CD4-positive, alpha-beta memory T cell (primary cell): ENCODE measurements at regions of chr2 and their contacts with region 1.

Region 1: GRCh38 chr2:68837164-68837860 is 33.9 kb downstream of the BMP10 start:
- DNase-seq: peak; percentile 50 to 62 (median 54)
- H3K4me3 ChIP-seq: no peak overlapping the region
- H3K4me3 Mint-ChIP-seq: peak overlapping the region in 2 of 8 donors; percentile 24 to 38
- H3K27ac ChIP-seq: no peak overlapping the region
- H3K27ac Mint-ChIP-seq: peak overlapping the region in 3 of 7 donors; percentile 47 to 66 (median 60)
- H3K4me1 ChIP-seq: peaks cover 26% of the 10 kb centered on the region
- H3K4me1 Mint-ChIP-seq: peaks cover 19 to 44% (median 31%) of the 10 kb centered on the region in 4 donors
- H3K27me3 ChIP-seq: no peaks in the 10 kb centered on the region
- H3K27me3 Mint-ChIP-seq: no peaks in the 10 kb centered on the region

Region 2: DNA sequence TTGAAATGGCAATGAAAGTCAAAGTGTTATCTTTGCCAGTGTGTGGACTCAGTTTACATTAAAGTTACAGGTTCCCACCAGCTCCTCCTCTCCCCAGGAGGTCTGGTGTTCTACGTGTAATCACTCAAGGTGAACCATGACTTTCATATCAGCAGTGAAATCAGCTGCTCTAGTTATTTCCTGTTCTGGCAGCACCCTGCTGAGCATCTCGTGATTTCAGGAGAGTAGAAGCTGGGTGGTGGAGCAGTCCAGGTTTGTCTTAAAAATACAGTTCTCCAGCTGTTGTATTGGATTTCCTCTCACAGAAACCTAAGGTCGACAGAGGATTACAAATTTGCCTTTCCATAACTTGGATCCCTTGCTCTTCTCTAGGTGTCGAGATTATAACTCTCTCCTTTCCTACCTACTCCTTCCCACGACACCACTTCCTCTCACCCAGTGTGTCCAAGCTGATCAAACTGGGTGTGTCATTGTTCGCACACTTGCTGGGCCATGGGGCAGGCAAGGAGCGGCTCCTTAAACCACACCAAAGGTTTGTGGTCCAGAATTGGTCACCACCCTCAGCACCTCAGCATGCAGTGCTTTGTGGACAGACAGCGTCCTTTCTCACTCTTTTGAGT is 115.7 kb before region 1 on chr2:
- CTCF ChIA-PET with region 1: interaction called, 25 read pairs
- POLR2A ChIA-PET with region 1: no interaction called
- intact Hi-C with region 1: no loop called
- DNase-seq: peak; percentile 64 to 78 (median 70)
- H3K4me3 ChIP-seq: peak overlapping the region in 1 of 2 donors; percentile 6
- H3K4me3 Mint-ChIP-seq: peak overlapping the region; percentile 63 to 89 (median 83)
- H3K27ac ChIP-seq: peak overlapping the region; percentile 54
- H3K27ac Mint-ChIP-seq: peak overlapping the region; percentile 91 to 98 (median 96)
- H3K4me1 ChIP-seq: peaks cover 96% of the 10 kb centered on the region
- H3K4me1 Mint-ChIP-seq: peaks cover 75 to 99% (median 90%) of the 10 kb centered on the region in 4 donors
- H3K27me3 ChIP-seq: no peaks in the 10 kb centered on the region
- H3K27me3 Mint-ChIP-seq: no peaks in the 10 kb centered on the region

Region 3: GRCh38 chr2:68742626-68743415 is 94.5 kb before region 1 on chr2:
- CTCF ChIA-PET with region 1: interaction called, 199 read pairs
- POLR2A ChIA-PET with region 1: interaction called, 13 read pairs
- intact Hi-C with region 1: no loop called
- DNase-seq: no peak
- H3K4me3 ChIP-seq: peak overlapping the region in 1 of 2 donors; percentile 29
- H3K4me3 Mint-ChIP-seq: peak overlapping the region; percentile 61 to 88 (median 79)
- H3K27ac ChIP-seq: no peak overlapping the region
- H3K27ac Mint-ChIP-seq: peak overlapping the region in 6 of 7 donors; percentile 78 to 93 (median 81)
- H3K4me1 ChIP-seq: peaks cover 99% of the 10 kb centered on the region
- H3K4me1 Mint-ChIP-seq: peaks cover 78 to 97% (median 89%) of the 10 kb centered on the region in 4 donors
- H3K27me3 ChIP-seq: no peaks in the 10 kb centered on the region
- H3K27me3 Mint-ChIP-seq: no peaks in the 10 kb centered on the region

Region 4: DNA sequence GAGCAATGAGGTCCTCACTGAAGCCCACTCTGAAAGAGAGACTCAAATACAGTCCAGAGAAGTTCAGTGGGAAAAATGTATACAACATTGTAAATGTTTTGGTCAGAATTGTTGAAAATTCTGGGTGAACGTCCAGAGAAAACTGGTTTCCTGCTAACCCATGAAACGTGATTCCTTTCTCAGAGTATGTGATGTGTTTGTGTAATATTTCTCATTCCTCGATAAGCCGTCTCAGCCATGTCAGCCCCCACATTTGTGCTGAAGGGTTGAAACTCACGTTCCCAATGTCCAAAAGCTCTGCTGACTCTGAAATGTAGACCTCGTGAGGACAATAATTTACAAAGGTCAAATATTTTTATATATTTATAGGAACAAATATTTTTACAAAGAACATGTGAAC is 17.8 kb before region 1 on chr2:
- CTCF ChIA-PET with region 1: interaction called, 15 read pairs
- POLR2A ChIA-PET with region 1: no interaction called
- intact Hi-C with region 1: no loop called
- DNase-seq: no peak
- H3K4me3 ChIP-seq: no peak overlapping the region
- H3K4me3 Mint-ChIP-seq: no peak overlapping the region
- H3K27ac ChIP-seq: no peak overlapping the region
- H3K27ac Mint-ChIP-seq: peak overlapping the region in 6 of 7 donors; percentile 29 to 87 (median 54)
- H3K4me1 ChIP-seq: peaks cover 4% of the 10 kb centered on the region
- H3K4me1 Mint-ChIP-seq: peaks cover 14 to 28% (median 14%) of the 10 kb centered on the region in 4 donors
- H3K27me3 ChIP-seq: no peaks in the 10 kb centered on the region
- H3K27me3 Mint-ChIP-seq: no peaks in the 10 kb centered on the region